ENCODE measurements at regions of chr17 and their contacts with region 1.

Region 1: DNA sequence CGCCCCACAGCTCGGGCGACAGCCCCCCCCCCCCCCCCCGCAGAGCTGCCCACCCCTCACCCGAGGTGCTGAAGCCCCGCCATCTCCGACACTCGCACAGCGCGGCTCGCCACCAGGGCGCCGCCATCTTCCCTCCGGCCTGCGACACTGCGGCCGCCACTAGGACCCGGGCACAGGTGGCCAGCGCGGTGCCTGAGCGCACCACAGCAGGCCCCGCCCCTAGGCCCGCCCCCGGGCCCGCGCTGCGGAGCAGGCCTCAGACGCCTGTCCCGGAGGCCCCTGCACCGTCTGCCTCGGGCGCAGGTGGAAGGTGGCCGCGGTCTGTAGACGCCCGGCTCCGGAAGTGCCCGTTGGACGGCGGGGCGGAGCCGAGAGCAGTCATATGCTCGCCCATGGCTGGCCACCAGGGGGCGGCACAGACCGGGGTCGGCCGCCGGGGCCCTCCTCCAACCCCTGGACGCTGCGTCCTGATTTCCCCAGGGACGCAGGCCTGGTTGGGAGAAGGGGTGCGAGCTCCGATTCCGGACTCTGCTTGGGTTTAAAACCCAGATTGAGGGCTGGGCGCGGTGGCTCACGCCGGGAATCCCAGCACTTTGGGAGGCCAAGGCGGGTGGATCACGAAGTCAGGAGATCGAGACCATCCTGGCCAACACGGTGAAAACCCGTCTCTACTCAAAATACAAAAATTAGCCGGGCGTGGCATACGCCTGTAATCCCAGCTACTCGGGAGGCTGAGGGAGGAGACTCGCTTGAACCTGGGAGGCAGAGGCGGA is at the start of gene MRPL38:
- DNase-seq: peak; percentile 83 to 88 (median 86)
- H3K4me3 ChIP-seq: peak within 1 kb of the TSS; percentile 80 to 87 (median 86)
- H3K4me3 Mint-ChIP-seq: peak within 1 kb of the TSS; percentile 90 to 93
- H3K27ac ChIP-seq: peak within 1 kb of the TSS; percentile 68 to 78
- H3K27ac Mint-ChIP-seq: peak within 1 kb of the TSS; percentile 79 to 94 (median 89)
- H3K4me1 ChIP-seq: peaks cover 19 to 23% of the 10 kb centered on the region in 2 donors
- H3K4me1 Mint-ChIP-seq: peaks cover 15% of the 10 kb centered on the region
- H3K27me3 ChIP-seq: no peaks in the 10 kb centered on the region
- H3K27me3 Mint-ChIP-seq: peaks cover 0 to 1% (median under 1%) of the 10 kb centered on the region in 3 donors
- CTCF ChIP-seq: peak; percentile 100
- polyA plus RNA-seq, gene MRPL38: 27.8 to 44.1 (median 36.0) TPM

Region 2: DNA sequence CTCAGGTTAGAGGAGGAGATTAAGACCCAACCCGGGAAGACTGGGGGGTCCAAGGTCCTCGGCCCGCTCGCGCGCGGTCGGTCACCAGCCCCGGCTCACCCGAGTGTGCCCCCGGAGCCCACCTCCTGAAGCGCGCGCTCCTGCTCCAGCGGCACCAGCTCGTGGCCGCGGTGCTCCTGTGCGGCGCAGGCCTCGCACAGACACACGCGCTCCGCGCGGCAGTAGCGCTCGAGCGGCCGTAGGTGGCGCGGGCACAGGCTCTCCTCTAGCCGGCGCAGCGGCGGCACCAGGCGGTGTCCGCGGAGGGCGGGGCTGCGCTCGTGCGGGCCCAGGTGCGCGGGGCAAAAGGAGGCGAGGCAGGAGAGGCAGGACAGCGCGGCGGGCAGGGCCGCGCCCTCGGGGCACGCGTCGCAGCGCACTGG is 27.2 kb before region 1 on chr17:
- intact Hi-C with region 1: no loop called
- DNase-seq: peak; percentile 56 to 67 (median 62)
- H3K4me3 ChIP-seq: peak overlapping the region in 2 of 3 experiments; percentile 23 to 68
- H3K4me3 Mint-ChIP-seq: peak overlapping the region; percentile 73 to 95
- H3K27ac ChIP-seq: no peak overlapping the region
- H3K27ac Mint-ChIP-seq: no peak overlapping the region
- H3K4me1 ChIP-seq: peaks cover 27 to 38% of the 10 kb centered on the region in 2 donors
- H3K4me1 Mint-ChIP-seq: peaks cover 28% of the 10 kb centered on the region
- H3K27me3 ChIP-seq: peaks cover 16 to 48% of the 10 kb centered on the region in 2 donors
- H3K27me3 Mint-ChIP-seq: peaks cover 55 to 68% (median 55%) of the 10 kb centered on the region in 3 donors
- CTCF ChIP-seq: peak; percentile 72

Region 3: DNA sequence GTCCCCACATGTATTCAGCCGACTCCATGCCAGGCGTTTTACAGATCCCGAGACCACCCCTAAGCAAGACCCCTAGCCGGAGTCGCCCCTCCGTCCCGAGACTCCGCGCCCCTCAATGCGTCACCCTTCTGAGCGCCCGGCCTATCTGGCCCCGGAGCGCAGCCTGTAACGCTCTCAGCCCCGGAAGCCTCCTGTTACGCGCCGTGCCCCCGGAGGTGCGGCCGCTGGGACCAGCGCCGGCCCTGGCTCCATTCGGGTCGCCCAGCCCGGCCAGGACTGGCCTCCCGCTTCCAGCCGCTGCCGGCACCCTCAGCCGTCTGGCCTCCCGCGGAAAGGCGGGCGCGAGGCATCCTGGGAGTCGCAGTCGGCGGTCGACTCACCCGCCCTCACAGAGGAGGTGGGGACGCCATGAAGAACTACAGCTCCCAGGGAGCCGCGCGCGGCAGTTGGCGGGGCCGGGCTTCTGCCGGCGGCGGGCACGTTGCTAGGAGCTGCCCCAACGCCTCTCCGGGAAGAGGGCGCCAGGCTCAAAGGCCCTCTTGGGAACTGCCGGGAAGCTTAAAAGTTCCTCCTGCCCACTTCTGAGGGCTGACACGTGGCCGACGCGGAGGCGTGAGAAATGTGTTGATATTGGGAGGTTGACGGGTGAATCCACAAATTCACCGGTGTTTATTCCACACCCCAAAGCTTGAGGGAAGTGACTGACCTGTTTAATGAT is 35.9 kb after region 1 on chr17 and contains the start of gene FBF1:
- intact Hi-C with region 1: loop called in 1 of 2 experiments (anchors 5 kb)
- DNase-seq: peak; percentile 83 to 85 (median 84)
- H3K4me3 ChIP-seq: peak within 1 kb of the TSS; percentile 73 to 84 (median 79)
- H3K4me3 Mint-ChIP-seq: peak within 1 kb of the TSS; percentile 86 to 93
- H3K27ac ChIP-seq: peak within 1 kb of the TSS in 1 of 2 donors; percentile 54
- H3K27ac Mint-ChIP-seq: peak within 1 kb of the TSS; percentile 32 to 90 (median 76)
- H3K4me1 ChIP-seq: peaks cover 11 to 16% of the 10 kb centered on the region in 2 donors
- H3K4me1 Mint-ChIP-seq: peaks cover 13% of the 10 kb centered on the region
- H3K27me3 ChIP-seq: no peaks in the 10 kb centered on the region
- H3K27me3 Mint-ChIP-seq: peaks cover 0 to 8% (median 2%) of the 10 kb centered on the region in 3 donors
- CTCF ChIP-seq: no peak
- polyA plus RNA-seq, gene FBF1: 0.32 to 4.4 (median 0.62) TPM

Region 4: DNA sequence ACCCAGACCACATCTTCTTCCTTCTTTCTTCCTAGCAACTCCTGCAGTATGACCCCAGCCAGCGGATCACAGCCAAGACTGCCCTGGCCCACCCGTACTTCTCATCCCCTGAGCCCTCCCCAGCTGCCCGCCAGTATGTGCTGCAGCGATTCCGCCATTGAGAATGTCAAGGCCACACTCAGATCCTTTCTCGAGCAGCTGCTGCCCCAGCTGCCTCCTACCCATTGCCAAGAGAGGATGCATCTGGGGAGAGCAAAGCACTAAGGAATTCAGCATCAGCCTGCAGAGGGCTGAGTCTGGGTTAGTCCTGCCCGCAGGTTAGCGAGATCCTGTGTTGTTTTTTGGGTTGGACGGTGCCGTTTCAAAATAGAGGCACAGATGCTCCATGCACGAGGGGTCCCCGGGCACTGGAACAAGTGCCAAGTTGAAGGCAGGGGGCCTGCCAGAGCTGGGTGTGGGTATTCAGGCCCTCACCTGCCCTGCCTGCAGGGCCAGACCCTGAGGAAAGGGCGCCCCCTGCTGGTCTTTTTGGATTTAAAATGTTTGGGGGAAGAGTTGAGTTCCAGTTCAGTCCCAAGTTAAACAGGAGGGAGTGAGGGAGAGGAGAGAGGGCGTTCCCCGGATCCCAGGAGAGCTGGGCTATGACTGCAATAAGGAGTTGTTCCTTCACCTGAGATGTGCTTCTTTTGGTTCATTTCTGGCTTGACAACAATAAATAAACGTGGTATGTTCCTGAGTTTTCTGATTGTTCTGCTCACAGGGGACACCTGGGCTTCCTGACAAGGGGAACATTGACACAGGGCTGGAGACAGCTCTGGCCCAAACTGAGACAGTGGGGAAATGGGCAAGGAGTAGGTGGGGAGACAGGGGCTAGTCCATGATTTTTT is 100.6 kb after region 1 on chr17:
- intact Hi-C with region 1: loop called (anchors 1 to 2 kb)
- DNase-seq: peak; percentile 54 to 67 (median 63)
- H3K4me3 ChIP-seq: no peak overlapping the region
- H3K4me3 Mint-ChIP-seq: no peak overlapping the region
- H3K27ac ChIP-seq: no peak overlapping the region
- H3K27ac Mint-ChIP-seq: peak overlapping the region in 2 of 7 donors; percentile 27 to 33
- H3K4me1 ChIP-seq: no peaks in the 10 kb centered on the region
- H3K4me1 Mint-ChIP-seq: no peaks in the 10 kb centered on the region
- H3K27me3 ChIP-seq: no peaks in the 10 kb centered on the region
- H3K27me3 Mint-ChIP-seq: peaks cover 1 to 3% (median 2%) of the 10 kb centered on the region in 3 donors
- CTCF ChIP-seq: peak; percentile 90

Region 5: GRCh38 chr17:76121932-76122430 is 217.0 kb after region 1 on chr17:
- intact Hi-C with region 1: no loop called
- DNase-seq: no peak
- H3K4me3 ChIP-seq: peak overlapping the region; percentile 18 to 73 (median 21)
- H3K4me3 Mint-ChIP-seq: peak overlapping the region; percentile 9 to 53
- H3K27ac ChIP-seq: no peak overlapping the region
- H3K27ac Mint-ChIP-seq: peak overlapping the region in 1 of 7 donors; percentile 75
- H3K4me1 ChIP-seq: peaks cover 10 to 20% of the 10 kb centered on the region in 2 donors
- H3K4me1 Mint-ChIP-seq: peaks cover 11% of the 10 kb centered on the region
- H3K27me3 ChIP-seq: no peaks in the 10 kb centered on the region
- H3K27me3 Mint-ChIP-seq: peaks cover 8 to 27% (median 16%) of the 10 kb centered on the region in 3 donors
- CTCF ChIP-seq: no peak

Measured in CD14-positive monocyte (primary cell).